Posterior cingulate gyrus (tissue), 11 donors: ENCODE measurements at regions of chrX and their contacts with region 1.

Region 1: GRCh38 chrX:108224727-108225621 is 133.4 kb downstream of the ATG4A start:
- DNase-seq: no peak

Region 2: GRCh38 chrX:108312938-108313337 is 88.0 kb after region 1 on chrX:
- intact Hi-C with region 1: no loop called
- DNase-seq: peak in 1 of 10 donors; percentile 62

Region 3: GRCh38 chrX:108415891-108416290 is 190.9 kb after region 1 on chrX:
- intact Hi-C with region 1: no loop called
- DNase-seq: no peak

Region 4: GRCh38 chrX:108537005-108537404 is 312.0 kb after region 1 on chrX:
- intact Hi-C with region 1: loop called (anchors 5 kb)
- DNase-seq: no peak

Region 5: DNA sequence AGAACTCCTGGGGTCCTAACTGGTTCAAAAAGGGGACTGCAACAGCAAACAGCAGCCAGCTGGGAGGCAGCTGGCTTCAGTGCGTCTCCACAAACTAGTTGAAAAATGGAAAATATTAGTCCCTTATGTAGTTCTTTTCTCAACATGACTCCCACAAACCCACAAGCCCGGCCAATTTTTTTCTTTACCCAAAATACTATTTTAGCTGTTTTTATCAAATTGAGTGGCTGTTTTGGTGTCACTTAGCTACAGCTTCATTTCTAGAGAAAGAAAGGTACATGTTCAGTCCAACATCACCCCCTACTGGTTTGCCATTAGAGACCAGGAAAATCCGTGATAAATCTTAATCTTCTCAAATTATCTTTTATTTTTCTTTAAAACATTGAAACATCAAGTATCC is 1159.7 kb after region 1 on chrX:
- intact Hi-C with region 1: loop called (anchors 10 kb)
- DNase-seq: no peak